Activated CD4-positive, alpha-beta memory T cell treated with anti-CD3 and anti-CD28 coated beads for 36 hours (primary cell): ENCODE measurements at regions of chr11 and their contacts with region 1.

Region 1: GRCh38 chr11:45846974-45847910 is at the start of gene CRY2:
- DNase-seq: peak; percentile 99
- H3K4me3 Mint-ChIP-seq: peak within 1 kb of the TSS; percentile 77
- H3K27ac Mint-ChIP-seq: peak within 1 kb of the TSS; percentile 78
- H3K4me1 Mint-ChIP-seq: peaks cover 55% of the 10 kb centered on the region
- H3K27me3 Mint-ChIP-seq: no peaks in the 10 kb centered on the region
- total RNA-seq, gene CRY2: 12.1 to 13.4 TPM

Region 2: GRCh38 chr11:45354976-45355705 is 492.1 kb before region 1 on chr11:
- CTCF ChIA-PET with region 1: no interaction called
- POLR2A ChIA-PET with region 1: no interaction called
- intact Hi-C with region 1: loop called (anchors 5 kb)
- DNase-seq: peak; percentile 93
- H3K4me3 Mint-ChIP-seq: peak overlapping the region; percentile 76
- H3K27ac Mint-ChIP-seq: peak overlapping the region; percentile 47
- H3K4me1 Mint-ChIP-seq: peaks cover 17% of the 10 kb centered on the region
- H3K27me3 Mint-ChIP-seq: no peaks in the 10 kb centered on the region

Region 3: DNA sequence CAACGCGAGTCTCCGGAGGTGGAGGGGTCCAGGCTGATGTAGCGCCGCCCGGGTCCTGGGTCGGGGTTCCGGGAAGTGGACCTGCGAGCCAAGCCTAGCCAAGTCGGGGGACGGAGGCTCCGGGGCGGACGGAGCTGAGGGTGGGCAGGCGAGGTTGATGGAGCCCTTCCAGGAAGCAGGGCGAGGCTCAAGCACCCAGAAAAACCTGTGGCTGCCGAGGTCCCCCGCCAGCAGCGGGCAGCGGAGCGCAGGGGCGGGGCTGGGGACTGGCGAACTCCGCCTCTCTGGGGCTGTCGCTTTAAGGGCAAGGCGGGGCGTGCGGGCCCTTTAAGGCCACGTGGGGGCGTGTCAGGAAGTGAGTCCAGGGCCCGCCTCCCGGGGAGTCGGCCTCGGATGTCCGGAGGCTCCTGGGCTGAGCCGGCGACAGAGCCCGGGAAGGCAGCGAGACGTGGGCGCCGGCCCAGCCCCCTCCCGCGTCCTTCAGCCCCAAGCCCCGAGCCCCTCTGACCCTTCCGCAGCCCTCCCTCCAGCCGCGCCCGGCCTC is 42.4 kb before region 1 on chr11 and contains the start of gene SLC35C1:
- CTCF ChIA-PET with region 1: interaction called, 5 read pairs
- POLR2A ChIA-PET with region 1: interaction called, 13 read pairs
- intact Hi-C with region 1: loop called (anchors 1 kb)
- DNase-seq: peak; percentile 97
- H3K4me3 Mint-ChIP-seq: peak within 1 kb of the TSS; percentile 90
- H3K27ac Mint-ChIP-seq: peak within 1 kb of the TSS; percentile 86
- H3K4me1 Mint-ChIP-seq: peaks cover 42% of the 10 kb centered on the region
- H3K27me3 Mint-ChIP-seq: no peaks in the 10 kb centered on the region
- total RNA-seq, gene SLC35C1: 10.7 to 11.4 TPM

Region 4: GRCh38 chr11:45834298-45834756 is 12.9 kb before region 1 on chr11:
- CTCF ChIA-PET with region 1: interaction called, 23 read pairs
- POLR2A ChIA-PET with region 1: no interaction called
- intact Hi-C with region 1: no loop called
- DNase-seq: peak; percentile 24
- H3K4me3 Mint-ChIP-seq: peak overlapping the region; percentile 45
- H3K27ac Mint-ChIP-seq: peak overlapping the region; percentile 46
- H3K4me1 Mint-ChIP-seq: peaks cover 11% of the 10 kb centered on the region
- H3K27me3 Mint-ChIP-seq: no peaks in the 10 kb centered on the region

Region 5: DNA sequence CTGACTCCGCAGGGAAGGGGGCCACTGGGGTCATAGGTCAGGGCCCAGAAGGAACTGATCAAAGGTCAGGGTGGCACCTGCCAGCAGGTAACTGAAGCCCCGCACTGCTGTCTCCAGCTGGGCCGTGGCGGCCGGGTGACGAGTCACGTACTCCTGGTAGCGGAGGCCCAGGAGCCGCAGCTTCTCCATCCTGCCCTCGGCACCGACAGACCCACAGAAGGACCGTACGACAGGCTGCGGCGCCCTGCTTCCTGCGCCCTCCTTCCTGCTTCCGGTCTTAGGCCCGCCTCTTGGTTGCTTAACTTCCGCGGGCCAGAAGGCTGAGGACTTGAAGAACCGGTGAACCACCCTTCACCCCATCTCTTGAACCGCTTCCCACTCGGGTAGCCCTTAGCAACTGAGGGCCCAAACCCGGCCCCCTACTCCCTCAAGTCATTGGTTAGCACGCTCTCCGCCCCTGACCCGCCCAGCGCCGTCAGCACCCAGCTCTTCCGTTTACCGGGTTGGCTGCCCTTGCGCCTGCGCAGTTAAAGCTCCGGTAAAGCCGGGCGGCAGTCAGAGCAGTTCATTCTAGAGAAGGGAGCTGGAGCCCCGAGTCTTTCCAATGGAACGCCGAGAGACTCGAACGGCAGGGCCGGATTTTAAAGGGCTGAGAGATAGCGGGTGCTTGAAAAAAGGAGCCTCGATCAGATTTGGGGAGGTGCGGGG is 70.5 kb after region 1 on chr11 and contains the start of gene PEX16:
- CTCF ChIA-PET with region 1: interaction called, 7 read pairs
- POLR2A ChIA-PET with region 1: interaction called, 5 read pairs
- intact Hi-C with region 1: loop called (anchors 1 kb)
- DNase-seq: peak; percentile 98
- H3K4me3 Mint-ChIP-seq: peak within 1 kb of the TSS; percentile 96
- H3K27ac Mint-ChIP-seq: peak within 1 kb of the TSS; percentile 96
- H3K4me1 Mint-ChIP-seq: peaks cover 26% of the 10 kb centered on the region
- H3K27me3 Mint-ChIP-seq: peaks cover 3% of the 10 kb centered on the region
- total RNA-seq, gene PEX16: 28.2 to 34.6 TPM

Region 6: GRCh38 chr11:46006418-46007070 is 159.3 kb after region 1 on chr11:
- CTCF ChIA-PET with region 1: interaction called, 6 read pairs
- POLR2A ChIA-PET with region 1: no interaction called
- intact Hi-C with region 1: loop called (anchors 10 kb)
- DNase-seq: no peak
- H3K4me3 Mint-ChIP-seq: no peak overlapping the region
- H3K27ac Mint-ChIP-seq: no peak overlapping the region
- H3K4me1 Mint-ChIP-seq: peaks cover 2% of the 10 kb centered on the region
- H3K27me3 Mint-ChIP-seq: no peaks in the 10 kb centered on the region

Region 7: DNA sequence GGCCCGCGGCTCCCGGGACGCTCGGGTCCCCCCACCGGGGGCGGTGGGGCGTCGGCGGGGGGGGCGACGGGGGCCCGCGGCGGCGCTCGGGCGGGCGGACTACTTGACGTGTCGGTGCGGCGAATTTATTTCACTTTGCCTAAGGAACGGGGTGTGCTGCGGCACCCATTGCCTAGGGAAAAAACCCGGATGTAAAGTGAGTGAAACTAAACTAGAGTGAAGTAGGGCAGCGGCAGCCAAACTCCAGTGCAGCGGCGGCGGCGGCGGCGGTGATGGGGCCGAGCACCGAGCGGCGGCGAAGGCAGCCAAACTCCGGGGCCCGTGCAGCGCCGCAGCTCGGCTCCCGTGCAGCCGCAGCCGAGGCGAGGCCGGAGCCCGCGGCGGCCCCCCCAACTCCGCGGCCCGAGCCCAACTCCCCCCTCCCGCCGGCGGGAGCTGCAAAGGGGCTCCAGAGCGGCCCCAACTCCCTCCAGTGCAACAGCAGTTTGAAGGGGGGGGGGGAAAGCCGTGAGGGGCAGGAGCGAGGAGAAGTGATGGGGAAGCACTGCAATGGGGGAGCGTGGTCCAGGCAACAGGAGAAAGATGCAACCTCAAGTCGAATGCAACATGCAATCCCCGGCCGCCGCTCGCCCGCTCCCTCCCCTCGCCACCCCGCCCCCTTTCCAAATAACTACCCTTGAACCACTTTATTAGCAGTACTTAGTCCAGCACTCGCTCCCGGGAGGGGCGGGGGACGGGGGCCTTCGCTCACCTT is 274.7 kb after region 1 on chr11:
- CTCF ChIA-PET with region 1: no interaction called
- POLR2A ChIA-PET with region 1: no interaction called
- intact Hi-C with region 1: loop called (anchors 2 kb)
- DNase-seq: peak; percentile 82
- H3K4me3 Mint-ChIP-seq: peak overlapping the region; percentile 77
- H3K27ac Mint-ChIP-seq: peak overlapping the region; percentile 85
- H3K4me1 Mint-ChIP-seq: peaks cover 39% of the 10 kb centered on the region
- H3K27me3 Mint-ChIP-seq: no peaks in the 10 kb centered on the region

Region 8: DNA sequence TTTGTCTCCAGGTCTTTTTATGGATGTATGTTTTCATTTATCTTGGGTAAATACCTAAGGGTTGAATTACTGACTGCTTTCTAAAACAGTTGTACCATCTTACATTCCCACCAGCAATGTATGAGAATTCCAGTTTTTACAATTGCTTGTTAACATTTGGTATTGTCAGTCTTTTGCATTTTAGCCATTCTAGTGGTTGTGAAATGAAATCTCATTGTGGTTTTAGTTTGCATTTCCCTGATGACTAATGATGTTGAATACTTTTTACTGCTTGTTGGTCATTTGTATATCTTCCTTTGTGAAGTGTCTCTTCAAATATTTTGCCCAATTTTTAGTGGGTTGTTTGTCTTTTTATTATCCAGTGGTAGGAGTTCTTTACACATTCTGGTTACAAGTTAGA is 1236.7 kb after region 1 on chr11:
- CTCF ChIA-PET with region 1: no interaction called
- POLR2A ChIA-PET with region 1: no interaction called
- intact Hi-C with region 1: no loop called
- DNase-seq: no peak
- H3K4me3 Mint-ChIP-seq: no peak overlapping the region
- H3K27ac Mint-ChIP-seq: no peak overlapping the region
- H3K4me1 Mint-ChIP-seq: peaks cover 6% of the 10 kb centered on the region
- H3K27me3 Mint-ChIP-seq: no peaks in the 10 kb centered on the region